Activated CD8-positive, alpha-beta T cell treated with anti-CD3 and anti-CD28 coated beads for 36 hours (primary cell): ENCODE measurements at regions of chr2 and their contacts with region 1.

Region 1: GRCh38 chr2:71545572-71546274 is 92.4 kb downstream of the DYSF start:
- DNase-seq: peak; percentile 75
- ATAC-seq: peak; percentile 85
- H3K4me3 Mint-ChIP-seq: peak overlapping the region; percentile 53
- H3K27ac Mint-ChIP-seq: no peak overlapping the region
- H3K4me1 Mint-ChIP-seq: peaks cover 10% of the 10 kb centered on the region
- H3K27me3 Mint-ChIP-seq: peaks cover 10% of the 10 kb centered on the region
- CTCF ChIP-seq: peak; percentile 76

Region 2: GRCh38 chr2:71530641-71531332 is 14.9 kb before region 1 on chr2:
- CTCF ChIA-PET with region 1: interaction called, 36 read pairs
- POLR2A ChIA-PET with region 1: no interaction called
- intact Hi-C with region 1: no loop called
- DNase-seq: peak; percentile 34
- ATAC-seq: peak; percentile 83
- H3K4me3 Mint-ChIP-seq: no peak overlapping the region
- H3K27ac Mint-ChIP-seq: no peak overlapping the region
- H3K4me1 Mint-ChIP-seq: no peaks in the 10 kb centered on the region
- H3K27me3 Mint-ChIP-seq: peaks cover 14% of the 10 kb centered on the region
- CTCF ChIP-seq: peak; percentile 67

Region 3: GRCh38 chr2:71798266-71799012 is 252.7 kb after region 1 on chr2:
- CTCF ChIA-PET with region 1: interaction called, 21 read pairs
- POLR2A ChIA-PET with region 1: no interaction called
- intact Hi-C with region 1: loop called (anchors 5 kb)
- DNase-seq: peak; percentile 26
- ATAC-seq: peak; percentile 53
- H3K4me3 Mint-ChIP-seq: no peak overlapping the region
- H3K27ac Mint-ChIP-seq: no peak overlapping the region
- H3K4me1 Mint-ChIP-seq: no peaks in the 10 kb centered on the region
- H3K27me3 Mint-ChIP-seq: peaks cover 2% of the 10 kb centered on the region
- CTCF ChIP-seq: peak; percentile 57

Region 4: DNA sequence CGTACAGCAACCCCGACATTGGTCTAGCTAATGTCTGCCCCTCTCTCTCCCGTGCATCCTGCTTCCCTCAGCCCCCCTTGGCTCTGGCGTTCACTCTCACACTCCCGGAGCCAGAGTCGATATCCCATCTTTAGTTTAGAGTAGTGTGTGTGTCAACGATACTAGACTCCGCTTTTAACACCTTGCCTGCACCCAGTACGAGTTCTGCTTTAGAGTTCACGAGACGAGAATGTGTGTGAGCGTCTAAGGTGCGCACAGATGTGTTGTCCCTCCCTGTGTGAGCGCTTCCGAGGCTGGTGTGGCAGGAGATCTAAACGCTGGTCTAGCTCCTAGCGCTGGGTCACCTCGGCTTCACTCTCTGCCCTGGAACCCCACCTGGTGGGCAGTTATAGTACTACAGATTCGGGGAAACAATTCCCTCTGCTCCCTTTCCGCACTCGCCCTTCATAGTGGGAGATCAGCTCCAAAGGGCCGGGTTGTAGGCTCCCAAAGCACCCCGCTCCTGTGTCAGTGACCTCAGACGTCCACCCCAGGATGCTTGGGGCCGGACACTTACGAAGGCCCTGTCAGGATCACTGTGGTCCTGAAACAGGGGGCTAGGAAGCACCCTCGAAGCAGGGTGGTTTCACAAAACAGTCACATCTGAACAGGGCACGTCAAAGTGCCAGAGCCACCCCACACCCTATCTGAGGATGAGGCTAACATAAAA is 604.6 kb after region 1 on chr2:
- CTCF ChIA-PET with region 1: interaction called, 20 read pairs
- POLR2A ChIA-PET with region 1: no interaction called
- intact Hi-C with region 1: loop called (anchors 5 kb)
- DNase-seq: peak; percentile 74
- ATAC-seq: peak; percentile 86
- H3K4me3 Mint-ChIP-seq: peak overlapping the region; percentile 53
- H3K27ac Mint-ChIP-seq: no peak overlapping the region
- H3K4me1 Mint-ChIP-seq: peaks cover 32% of the 10 kb centered on the region
- H3K27me3 Mint-ChIP-seq: peaks cover 56% of the 10 kb centered on the region
- CTCF ChIP-seq: peak; percentile 80